ENCODE measurements at regions of chr11 and their contacts with region 1.

Region 1: DNA sequence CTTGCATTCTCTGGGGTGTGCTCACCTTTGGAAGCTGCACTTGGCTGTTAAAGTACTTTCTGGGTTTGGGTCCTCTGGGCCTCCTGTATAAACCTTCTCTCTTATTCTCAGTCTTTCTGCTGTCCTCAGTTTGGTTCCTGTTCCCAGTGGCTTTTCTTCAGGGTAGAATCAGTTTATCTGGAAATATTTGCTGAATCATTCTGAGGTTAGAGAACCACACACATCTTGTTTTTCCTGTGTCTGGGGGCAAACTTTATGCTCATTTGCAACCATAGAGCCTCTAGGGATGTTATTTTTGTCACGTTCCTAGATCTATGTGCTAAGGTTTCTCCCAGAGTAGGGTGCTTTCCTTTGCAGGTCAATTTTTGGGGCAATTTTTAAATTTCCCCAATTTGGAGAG is 224.3 kb upstream of the C11orf87 start:
- DNase-seq: no peak
- ATAC-seq: no peak
- H3K4me3 ChIP-seq: no peak overlapping the region
- H3K27ac ChIP-seq: no peak overlapping the region
- H3K4me1 ChIP-seq: no peaks in the 10 kb centered on the region
- H3K27me3 ChIP-seq: no peaks in the 10 kb centered on the region
- CTCF ChIP-seq: no peak

Region 2: DNA sequence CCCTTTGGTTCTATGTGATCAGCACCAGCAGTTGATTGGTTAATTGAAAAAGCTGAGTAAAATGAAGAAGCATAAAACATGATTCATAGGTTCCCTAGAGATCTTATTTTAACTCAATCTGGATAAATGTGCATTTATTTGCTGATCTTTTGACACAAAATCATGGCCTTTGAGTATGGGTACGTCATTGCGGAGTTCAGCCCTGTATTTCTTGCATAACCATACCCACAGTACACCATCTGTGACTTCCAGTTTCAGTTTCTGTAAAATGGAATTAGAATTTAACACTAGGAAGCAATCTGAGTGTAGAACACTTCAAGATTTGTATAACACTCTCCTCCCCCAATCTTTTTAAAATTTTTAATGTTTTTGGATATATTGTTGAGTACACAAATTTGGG is 174.6 kb before region 1 on chr11:
- CTCF ChIA-PET with region 1: no interaction called
- POLR2A ChIA-PET with region 1: no interaction called
- in situ Hi-C with region 1: no loop called
- intact Hi-C with region 1: no loop called
- DNase-seq: no peak
- ATAC-seq: no peak
- H3K4me3 ChIP-seq: no peak overlapping the region
- H3K27ac ChIP-seq: no peak overlapping the region
- H3K4me1 ChIP-seq: no peaks in the 10 kb centered on the region
- H3K27me3 ChIP-seq: no peaks in the 10 kb centered on the region; the same call in 1 of the 2 replicates
- CTCF ChIP-seq: no peak

Region 3: DNA sequence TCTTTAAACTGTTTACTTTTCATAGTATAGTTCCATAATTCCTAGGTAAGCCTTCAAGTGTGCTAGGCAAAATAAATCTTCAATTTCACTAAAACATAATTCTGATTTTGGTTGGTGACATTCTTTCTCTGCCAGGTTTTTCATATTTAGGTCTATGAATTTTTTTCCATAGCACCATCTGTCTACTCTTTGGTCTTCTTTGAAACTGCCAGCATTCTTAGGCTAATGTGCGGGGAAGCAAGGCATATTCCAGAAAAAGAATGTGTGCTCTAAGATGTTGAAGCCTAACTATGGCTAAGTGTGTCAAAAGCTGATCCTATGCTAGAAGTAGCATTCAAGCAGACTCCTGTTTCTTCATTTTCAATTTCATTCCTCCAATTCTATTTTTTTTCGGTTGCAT is 10.5 kb after region 1 on chr11:
- CTCF ChIA-PET with region 1: no interaction called
- POLR2A ChIA-PET with region 1: no interaction called
- in situ Hi-C with region 1: no loop called
- intact Hi-C with region 1: loop called (anchors 1 kb)
- DNase-seq: no peak
- ATAC-seq: no peak
- H3K4me3 ChIP-seq: no peak overlapping the region
- H3K27ac ChIP-seq: no peak overlapping the region
- H3K4me1 ChIP-seq: no peaks in the 10 kb centered on the region
- H3K27me3 ChIP-seq: no peaks in the 10 kb centered on the region
- CTCF ChIP-seq: no peak

Region 4: DNA sequence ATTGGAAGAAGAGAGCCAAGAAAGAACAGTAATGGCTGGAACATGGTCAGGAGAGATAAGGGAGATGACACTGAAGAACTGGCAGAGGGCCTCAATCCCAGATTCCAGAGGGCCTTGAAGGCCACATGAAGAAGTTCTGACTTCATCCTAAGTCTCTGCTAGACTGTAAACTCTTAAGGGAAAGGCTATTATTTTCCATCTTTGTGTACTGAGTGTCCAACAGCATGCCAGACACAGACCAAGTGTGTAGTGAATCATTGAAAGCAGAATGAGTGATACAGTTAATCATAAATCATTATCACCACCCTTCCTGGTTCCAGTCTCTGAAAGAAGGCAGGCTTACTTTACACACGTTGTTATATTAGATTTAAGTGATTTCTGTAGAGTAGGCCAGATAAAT is 39.0 kb after region 1 on chr11:
- CTCF ChIA-PET with region 1: no interaction called
- POLR2A ChIA-PET with region 1: no interaction called
- in situ Hi-C with region 1: no loop called
- intact Hi-C with region 1: loop called (anchors 1 kb)
- DNase-seq: no peak
- ATAC-seq: no peak
- H3K4me3 ChIP-seq: no peak overlapping the region
- H3K27ac ChIP-seq: no peak overlapping the region
- H3K4me1 ChIP-seq: no peaks in the 10 kb centered on the region
- H3K27me3 ChIP-seq: no peaks in the 10 kb centered on the region
- CTCF ChIP-seq: no peak